IMR-90 (cell line): ENCODE measurements at regions of chr1 and their contacts with region 1.

Region 1: GRCh38 chr1:169367486-169368405 is at the starts of genes BLZF1 and NME7:
- DNase-seq: peak; percentile 96
- ATAC-seq: peak; percentile 99
- H3K4me3 ChIP-seq: peak within 1 kb of the TSS; percentile 48
- H3K27ac ChIP-seq: peak within 1 kb of the TSS; percentile 62
- H3K4me1 ChIP-seq: 0 out of 2 replicates have a peak, but pooled peaks cover 4% of the 10 kb centered on the region
- H3K27me3 ChIP-seq: no peaks in the 10 kb centered on the region
- CTCF ChIP-seq: no peak
- POLR2A ChIP-seq: peak; percentile 81
- RAD21 ChIP-seq: no peak
- total RNA-seq, gene BLZF1: 24.2 and 38.9 TPM in 2 replicates
- total RNA-seq, gene NME7: 18.3 and 44.4 TPM in 2 replicates

Region 2: DNA sequence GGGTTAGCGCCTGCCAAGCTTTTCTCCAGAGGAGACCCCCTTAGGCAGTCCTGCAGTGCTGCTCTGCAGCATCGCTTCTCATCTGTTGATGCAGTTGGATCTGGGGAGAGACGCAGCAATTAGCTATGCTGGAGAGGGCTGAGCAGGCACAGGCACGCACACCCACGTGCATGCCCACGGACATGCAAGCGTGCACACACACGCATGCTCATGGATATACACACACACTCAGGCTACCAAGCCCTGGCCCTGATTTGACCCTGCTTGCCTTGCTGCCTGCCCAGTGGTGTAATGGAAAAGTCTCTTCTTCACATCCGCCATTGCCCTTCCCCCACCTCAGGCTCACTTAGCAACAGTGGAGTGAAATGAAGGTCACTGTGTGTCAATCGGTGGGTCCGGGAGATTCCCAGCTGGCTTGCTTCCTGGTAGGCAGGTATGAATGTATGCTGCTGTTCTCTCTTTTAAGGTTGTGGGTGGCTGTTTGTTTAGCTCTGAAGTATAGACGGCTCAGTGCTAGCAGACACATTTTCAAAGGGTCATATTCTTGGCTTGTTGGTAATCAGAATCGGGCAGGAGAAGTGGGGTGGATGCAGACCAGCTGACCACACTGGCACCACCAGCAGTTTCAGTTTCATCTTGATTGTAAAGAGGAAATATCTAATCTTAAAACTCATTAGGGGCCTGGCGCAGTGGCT is 251.7 kb before region 1 on chr1:
- CTCF ChIA-PET with region 1: interaction called, 3 read pairs
- POLR2A ChIA-PET with region 1: no interaction called
- dilution Hi-C with region 1: no loop called
- in situ Hi-C with region 1: loop called (anchors 5 kb)
- intact Hi-C with region 1: no loop called
- DNase-seq: peak; percentile 48
- ATAC-seq: no peak; the same call in 1 of the 2 replicates
- H3K4me3 ChIP-seq: no peak overlapping the region
- H3K27ac ChIP-seq: peak overlapping the region; percentile 2
- H3K4me1 ChIP-seq: peaks cover 39% of the 10 kb centered on the region
- H3K27me3 ChIP-seq: no peaks in the 10 kb centered on the region
- CTCF ChIP-seq: no peak
- POLR2A ChIP-seq: no peak
- RAD21 ChIP-seq: no peak

Region 3: GRCh38 chr1:170664828-170665612 is 1297.3 kb after region 1 on chr1:
- CTCF ChIA-PET with region 1: no interaction called
- POLR2A ChIA-PET with region 1: no interaction called
- dilution Hi-C with region 1: no loop called
- in situ Hi-C with region 1: no loop called
- intact Hi-C with region 1: no loop called
- DNase-seq: peak; percentile 61
- ATAC-seq: peak; percentile 67
- H3K4me3 ChIP-seq: peak overlapping the region; percentile 88
- H3K27ac ChIP-seq: peak overlapping the region; percentile 80
- H3K4me1 ChIP-seq: peaks cover 14% of the 10 kb centered on the region
- H3K27me3 ChIP-seq: no peaks in the 10 kb centered on the region
- CTCF ChIP-seq: peak; percentile 38
- POLR2A ChIP-seq: 0 out of 2 replicates have a peak, but pooled peaks have one; percentile 30
- RAD21 ChIP-seq: peak; percentile 28